PC-9 (cell line): ENCODE measurements at regions of chrX and their contacts with region 1.

Region 1: DNA sequence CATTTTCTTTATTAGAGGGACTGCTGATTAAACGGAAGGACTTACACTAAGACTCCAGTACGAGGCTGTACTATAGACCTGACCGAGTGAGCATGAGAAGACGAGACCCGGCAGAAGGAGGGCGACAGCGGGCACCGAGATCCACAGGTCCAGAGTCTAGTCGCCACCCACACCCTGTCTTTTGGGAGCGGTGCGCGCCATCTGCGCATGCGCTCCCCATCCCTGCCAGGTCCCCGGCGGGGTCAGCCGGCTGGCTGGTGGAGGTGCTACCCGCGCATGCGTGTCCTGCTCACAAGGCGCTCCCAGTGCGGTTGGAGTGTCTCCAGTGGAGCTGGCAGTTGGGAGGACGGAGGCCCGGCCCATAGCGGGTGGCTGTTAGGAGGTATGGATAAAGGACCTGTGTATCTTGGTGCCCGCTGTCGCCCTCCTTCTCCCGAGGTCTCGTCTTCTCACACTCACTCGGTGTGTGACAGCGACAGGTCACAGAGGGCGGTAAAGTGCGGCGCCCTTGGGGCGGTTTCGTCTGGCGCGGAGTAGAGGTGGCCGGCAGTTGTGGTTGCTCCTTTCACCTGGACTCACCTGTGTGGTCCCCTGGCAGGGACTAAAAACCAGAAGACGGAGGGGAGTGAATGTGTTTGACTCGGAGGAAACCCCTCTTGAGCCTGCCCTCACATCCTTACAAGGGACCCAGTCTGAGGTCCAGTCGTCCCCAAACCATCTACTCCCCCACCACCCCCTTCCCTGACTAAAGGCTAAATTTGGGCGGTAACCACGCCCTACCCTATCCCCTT is 7.6 kb upstream of the HSD17B10 start:
- DNase-seq: peak; percentile 45 to 94
- H3K4me3 ChIP-seq: peak overlapping the region; percentile 52; the same call in 1 of the 2 replicates
- H3K27ac ChIP-seq: peak overlapping the region; percentile 54; the same call in 1 of the 2 replicates
- H3K4me1 ChIP-seq: no peaks in the 10 kb centered on the region
- H3K27me3 ChIP-seq: no peaks in the 10 kb centered on the region
- CTCF ChIP-seq: no peak

Region 2: DNA sequence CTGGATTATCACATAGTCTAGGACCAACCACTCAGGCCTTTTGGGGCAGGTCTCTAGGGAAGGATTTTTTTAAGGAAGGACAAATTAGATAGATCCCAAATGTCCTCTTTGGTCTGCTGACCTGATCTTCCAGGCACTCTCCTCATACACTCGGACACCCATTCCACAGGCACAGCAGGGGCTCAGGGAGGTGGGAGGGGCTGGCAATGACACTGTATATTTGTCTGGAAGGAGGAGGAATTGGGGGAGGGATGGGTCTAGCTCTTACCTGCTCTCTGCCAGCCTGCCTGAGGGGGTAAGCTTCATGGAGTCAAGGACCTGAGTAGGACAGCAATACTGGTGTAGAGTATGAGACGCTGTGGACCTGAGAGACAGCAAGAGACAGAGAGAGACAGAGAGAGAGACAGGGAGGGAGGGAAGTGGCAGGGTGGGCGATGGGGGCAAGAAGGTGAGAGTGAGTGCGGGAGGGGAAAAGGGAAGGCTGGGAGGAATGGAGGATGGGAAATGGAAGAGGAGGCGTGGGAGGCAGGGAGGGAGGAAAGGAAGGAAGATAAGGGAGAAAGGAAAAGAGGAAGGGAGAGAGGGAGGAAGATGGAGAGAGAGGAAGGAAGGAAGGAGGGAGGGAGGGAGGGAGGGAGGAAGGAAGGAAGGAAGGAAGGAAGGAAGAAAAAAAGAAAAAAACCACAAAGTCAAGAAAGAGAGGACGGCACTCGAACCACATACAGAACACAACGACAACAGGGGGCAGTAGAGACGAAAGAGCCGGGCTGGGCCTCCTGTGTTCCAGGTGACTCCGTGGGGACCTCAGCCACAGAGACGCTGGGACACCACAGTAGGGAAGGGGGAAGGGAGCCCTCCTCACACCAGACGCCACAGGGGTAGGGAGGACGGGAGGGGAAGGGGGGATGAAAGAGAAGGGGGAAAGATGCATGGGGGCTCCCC is 162.2 kb before region 1 on chrX:
- CTCF ChIA-PET with region 1: interaction called, 14 read pairs
- POLR2A ChIA-PET with region 1: interaction called, 4 read pairs
- intact Hi-C with region 1: no loop called
- DNase-seq: peak in 1 of 2 experiments; percentile 20
- H3K4me3 ChIP-seq: peak overlapping the region; percentile 55; the same call in 1 of the 2 replicates
- H3K27ac ChIP-seq: peak overlapping the region; percentile 78; the same call in 1 of the 2 replicates
- H3K4me1 ChIP-seq: peaks cover 4% of the 10 kb centered on the region; the same call in 1 of the 2 replicates
- H3K27me3 ChIP-seq: no peaks in the 10 kb centered on the region
- CTCF ChIP-seq: no peak

Region 3: GRCh38 chrX:53422086-53422860 is 19.5 kb before region 1 on chrX and contains the start of gene SMC1A:
- CTCF ChIA-PET with region 1: interaction called, 5 read pairs
- POLR2A ChIA-PET with region 1: interaction called, 4 read pairs
- intact Hi-C with region 1: loop called (anchors 2 kb)
- DNase-seq: peak; percentile 82 to 99
- H3K4me3 ChIP-seq: peak within 1 kb of the TSS; percentile 58
- H3K27ac ChIP-seq: peak within 1 kb of the TSS; percentile 49; the same call in 1 of the 2 replicates
- H3K4me1 ChIP-seq: no peaks in the 10 kb centered on the region
- H3K27me3 ChIP-seq: no peaks in the 10 kb centered on the region
- CTCF ChIP-seq: no peak
- total RNA-seq, gene SMC1A: 114 and 162 TPM in 2 replicates

Region 4: DNA sequence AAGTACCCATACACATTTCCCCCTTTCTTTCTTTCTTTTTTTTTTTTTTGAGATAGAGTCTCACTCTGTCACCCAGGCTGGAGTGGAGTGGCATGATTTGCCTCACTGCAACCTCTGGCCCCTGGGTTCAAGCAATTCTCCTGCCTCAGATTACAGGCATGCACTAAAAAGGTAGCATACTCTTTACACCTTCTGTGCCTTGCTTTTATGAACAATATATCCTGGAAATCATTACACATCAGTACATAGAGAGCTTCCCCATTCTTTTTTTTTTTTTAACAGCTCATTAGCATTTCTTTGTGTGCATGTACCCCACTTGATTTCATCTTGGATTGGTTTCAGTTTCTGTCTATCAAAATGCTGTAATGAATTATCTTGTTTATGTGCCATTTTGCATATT is 11.1 kb after region 1 on chrX:
- CTCF ChIA-PET with region 1: no interaction called
- POLR2A ChIA-PET with region 1: interaction called, 11 read pairs
- intact Hi-C with region 1: no loop called
- DNase-seq: no peak
- H3K4me3 ChIP-seq: no peak overlapping the region
- H3K27ac ChIP-seq: no peak overlapping the region
- H3K4me1 ChIP-seq: peaks cover 4% of the 10 kb centered on the region; the same call in 1 of the 2 replicates
- H3K27me3 ChIP-seq: no peaks in the 10 kb centered on the region
- CTCF ChIP-seq: no peak

Region 5: GRCh38 chrX:53526999-53527398 is 85.3 kb after region 1 on chrX:
- CTCF ChIA-PET with region 1: interaction called, 10 read pairs
- POLR2A ChIA-PET with region 1: no interaction called
- intact Hi-C with region 1: no loop called
- DNase-seq: no peak
- H3K4me3 ChIP-seq: no peak overlapping the region
- H3K27ac ChIP-seq: no peak overlapping the region
- H3K4me1 ChIP-seq: no peaks in the 10 kb centered on the region
- H3K27me3 ChIP-seq: no peaks in the 10 kb centered on the region
- CTCF ChIP-seq: no peak